ENCODE measurements at regions of chr2 and their contacts with region 1.

Region 1: GRCh38 chr2:170815746-170816503 is 762 bp upstream of the GAD1 start:
- DNase-seq: peak; percentile 57
- ATAC-seq: peak; percentile 64 to 70

Region 2: DNA sequence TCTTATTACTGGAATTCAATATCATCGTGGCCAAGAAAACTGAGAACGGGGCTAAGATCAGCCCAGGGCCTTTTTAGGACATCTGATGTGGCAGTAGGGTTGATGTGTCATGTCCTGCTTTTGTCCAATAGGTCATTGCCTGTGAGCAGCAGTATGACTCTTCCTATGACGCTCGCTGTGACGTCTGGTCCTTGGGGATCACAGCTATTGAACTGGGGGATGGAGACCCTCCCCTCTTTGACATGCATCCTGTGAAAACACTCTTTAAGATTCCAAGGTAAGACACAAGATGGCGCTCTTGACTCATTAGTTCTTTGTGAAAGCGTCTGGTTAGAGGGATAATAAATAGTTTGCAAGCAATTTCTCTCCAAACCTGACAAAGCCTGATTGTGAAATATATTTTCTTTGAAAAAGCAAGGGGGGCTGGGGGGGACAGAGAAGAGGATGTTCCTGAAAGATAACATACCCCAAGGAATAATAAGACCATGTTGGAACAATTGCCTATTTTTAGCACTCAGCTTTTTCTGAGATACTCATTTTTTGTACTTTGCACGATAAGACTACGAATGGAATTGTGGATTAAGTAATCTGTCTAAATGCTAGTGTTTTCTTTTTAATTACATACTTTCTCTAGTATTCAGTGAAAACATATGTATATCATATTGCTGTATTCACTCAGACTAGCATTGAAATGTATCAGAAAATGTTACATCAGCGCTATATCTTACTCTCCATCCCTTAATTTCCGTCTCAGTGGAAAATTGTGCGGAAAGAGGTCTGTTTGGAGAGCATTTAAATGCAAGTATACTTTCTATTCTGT is 579.9 kb before region 1 on chr2:
- intact Hi-C with region 1: loop called (anchors 5 kb)
- DNase-seq: peak; percentile 36
- ATAC-seq: peak; percentile 42 to 57

Region 3: GRCh38 chr2:170361090-170361936 is 454.6 kb before region 1 on chr2:
- intact Hi-C with region 1: loop called (anchors 5 to 10 kb)
- DNase-seq: peak; percentile 28
- ATAC-seq: peak; percentile 50 to 61

Region 4: GRCh38 chr2:170409164-170409535 is 406.8 kb before region 1 on chr2:
- intact Hi-C with region 1: loop called in 1 of 2 experiments (anchors 5 kb)
- DNase-seq: peak; percentile 71
- ATAC-seq: peak; percentile 59 to 68

Region 5: GRCh38 chr2:170486730-170487129 is 329.2 kb before region 1 on chr2:
- intact Hi-C with region 1: loop called in 1 of 2 experiments (anchors 10 kb)
- DNase-seq: no peak
- ATAC-seq: no peak

Region 6: DNA sequence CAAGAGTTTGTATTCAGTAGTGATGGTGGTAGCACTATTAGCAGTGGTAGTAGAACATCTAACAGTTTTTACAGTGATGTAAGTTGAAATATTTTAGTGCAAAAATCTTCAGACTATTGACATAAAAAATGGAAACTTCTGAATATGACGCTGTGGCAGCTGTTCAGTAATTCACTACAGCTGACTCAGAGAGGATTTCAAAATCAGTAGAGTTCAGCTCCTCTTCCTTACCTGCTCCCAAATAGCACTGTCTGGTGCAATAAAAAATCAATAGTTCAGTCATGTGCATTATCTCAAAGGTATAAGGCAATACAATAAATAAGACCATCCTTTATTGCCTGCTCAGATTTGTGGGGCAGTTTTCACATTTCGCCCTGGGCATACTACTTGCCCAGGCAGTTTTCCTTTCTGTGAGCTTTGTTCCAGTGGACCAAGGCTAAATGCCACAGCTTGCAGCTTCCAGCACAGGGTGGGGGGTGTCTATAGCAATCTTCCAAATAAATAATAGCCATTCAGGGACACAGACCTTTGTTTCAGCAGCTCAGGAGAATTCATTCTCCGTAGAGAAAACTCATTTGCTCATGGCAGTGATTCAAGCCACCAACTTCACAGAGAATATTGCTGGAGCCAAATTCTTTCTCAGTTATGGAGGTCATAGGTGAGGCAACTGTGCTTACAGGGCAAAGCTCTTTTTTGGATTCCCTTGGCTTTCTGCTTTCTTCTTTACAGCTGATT is 79.3 kb after region 1 on chr2:
- intact Hi-C with region 1: no loop called
- DNase-seq: no peak
- ATAC-seq: no peak

Measured in left cardiac atrium (tissue), 4 donors.